ENCODE measurements at regions of chr6 and their contacts with region 1.

Region 1: DNA sequence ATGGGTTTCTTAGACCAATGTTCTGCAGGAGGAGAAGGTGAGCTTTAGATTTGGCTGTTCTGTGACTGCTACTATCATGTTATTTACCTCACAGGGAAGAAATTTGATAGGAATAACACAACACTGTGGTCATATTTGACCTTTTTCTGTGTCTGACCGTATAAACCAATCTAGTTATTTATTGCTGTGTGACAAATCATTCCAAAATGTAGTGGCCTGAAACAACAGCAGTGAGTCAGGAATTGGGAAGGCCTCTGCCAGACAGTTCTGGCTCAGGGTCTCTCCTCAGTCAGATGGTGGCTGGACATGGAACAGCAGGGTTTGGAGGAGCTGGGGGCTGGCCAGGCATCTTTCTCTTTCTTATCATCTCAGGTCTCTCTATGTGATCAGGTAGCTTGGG is 33.0 kb downstream of the RIPOR2 start:
- DNase-seq: no peak
- ATAC-seq: no peak
- H3K4me3 Mint-ChIP-seq: no peak overlapping the region
- H3K27ac Mint-ChIP-seq: peak overlapping the region; percentile 50
- H3K4me1 Mint-ChIP-seq: peaks cover 87% of the 10 kb centered on the region
- H3K27me3 Mint-ChIP-seq: no peaks in the 10 kb centered on the region

Region 2: GRCh38 chr6:24888715-24889370 is 13.9 kb before region 1 on chr6:
- CTCF ChIA-PET with region 1: interaction called, 19 read pairs
- POLR2A ChIA-PET with region 1: interaction called, 3 read pairs
- DNase-seq: no peak
- ATAC-seq: no peak
- H3K4me3 Mint-ChIP-seq: no peak overlapping the region
- H3K27ac Mint-ChIP-seq: peak overlapping the region; percentile 44
- H3K4me1 Mint-ChIP-seq: peaks cover 72% of the 10 kb centered on the region
- H3K27me3 Mint-ChIP-seq: no peaks in the 10 kb centered on the region

Region 3: DNA sequence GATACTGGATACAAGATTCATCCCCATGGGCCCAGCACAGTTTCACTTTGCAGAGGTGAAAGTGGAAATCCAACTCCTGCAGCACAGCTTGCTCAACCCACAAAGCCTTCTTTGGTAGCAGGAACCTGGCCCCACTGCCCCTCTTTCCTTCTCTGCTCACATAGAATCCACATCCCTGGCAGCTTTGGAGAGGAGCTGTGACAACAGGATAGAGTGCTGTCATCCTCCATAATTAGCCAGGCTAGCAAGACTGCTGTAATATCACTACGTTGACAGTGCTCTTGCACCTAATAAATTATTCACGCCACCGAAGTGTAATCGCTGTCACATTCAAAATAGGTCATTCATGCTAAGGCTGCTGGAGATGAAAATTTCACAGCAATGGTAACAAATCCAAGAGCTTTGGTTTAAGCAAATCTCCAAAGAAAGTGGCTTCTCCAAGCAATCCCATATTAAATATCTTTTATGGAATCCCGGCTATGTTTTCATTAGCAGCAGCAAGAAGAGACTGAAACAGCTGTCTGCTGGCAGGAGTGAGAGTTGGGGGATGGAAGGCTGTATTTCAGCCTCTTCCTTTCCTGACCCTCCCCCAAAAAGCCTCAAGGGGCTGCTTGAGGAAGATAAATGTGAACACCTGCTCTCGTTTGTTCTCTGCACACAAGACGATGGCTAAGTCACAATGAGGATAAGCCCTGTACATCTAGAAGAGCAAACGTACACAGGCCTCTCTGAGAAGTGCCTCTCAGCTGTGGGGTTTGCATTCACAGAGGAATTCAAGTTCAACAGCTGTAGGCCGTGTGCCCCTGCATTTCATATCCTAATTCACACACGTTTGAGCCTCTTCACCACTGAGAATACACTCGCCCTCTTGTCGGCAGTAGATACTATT is 16.5 kb after region 1 on chr6:
- CTCF ChIA-PET with region 1: interaction called, 74 read pairs
- POLR2A ChIA-PET with region 1: interaction called, 5 read pairs
- DNase-seq: peak; percentile 44
- ATAC-seq: peak; percentile 50
- H3K4me3 Mint-ChIP-seq: peak overlapping the region; percentile 53
- H3K27ac Mint-ChIP-seq: peak overlapping the region; percentile 62
- H3K4me1 Mint-ChIP-seq: peaks cover 86% of the 10 kb centered on the region
- H3K27me3 Mint-ChIP-seq: no peaks in the 10 kb centered on the region

Region 4: GRCh38 chr6:24974182-24975171 is 71.7 kb after region 1 on chr6:
- CTCF ChIA-PET with region 1: no interaction called
- POLR2A ChIA-PET with region 1: no interaction called
- DNase-seq: no peak
- ATAC-seq: peak; percentile 91
- H3K4me3 Mint-ChIP-seq: peak overlapping the region; percentile 24
- H3K27ac Mint-ChIP-seq: peak overlapping the region; percentile 73
- H3K4me1 Mint-ChIP-seq: peaks cover 20% of the 10 kb centered on the region
- H3K27me3 Mint-ChIP-seq: no peaks in the 10 kb centered on the region

Region 5: GRCh38 chr6:25312703-25313501 is 410.1 kb after region 1 on chr6:
- CTCF ChIA-PET with region 1: no interaction called
- POLR2A ChIA-PET with region 1: no interaction called
- DNase-seq: no peak
- ATAC-seq: no peak
- H3K4me3 Mint-ChIP-seq: no peak overlapping the region
- H3K27ac Mint-ChIP-seq: no peak overlapping the region
- H3K4me1 Mint-ChIP-seq: peaks cover 12% of the 10 kb centered on the region
- H3K27me3 Mint-ChIP-seq: no peaks in the 10 kb centered on the region

Region 6: DNA sequence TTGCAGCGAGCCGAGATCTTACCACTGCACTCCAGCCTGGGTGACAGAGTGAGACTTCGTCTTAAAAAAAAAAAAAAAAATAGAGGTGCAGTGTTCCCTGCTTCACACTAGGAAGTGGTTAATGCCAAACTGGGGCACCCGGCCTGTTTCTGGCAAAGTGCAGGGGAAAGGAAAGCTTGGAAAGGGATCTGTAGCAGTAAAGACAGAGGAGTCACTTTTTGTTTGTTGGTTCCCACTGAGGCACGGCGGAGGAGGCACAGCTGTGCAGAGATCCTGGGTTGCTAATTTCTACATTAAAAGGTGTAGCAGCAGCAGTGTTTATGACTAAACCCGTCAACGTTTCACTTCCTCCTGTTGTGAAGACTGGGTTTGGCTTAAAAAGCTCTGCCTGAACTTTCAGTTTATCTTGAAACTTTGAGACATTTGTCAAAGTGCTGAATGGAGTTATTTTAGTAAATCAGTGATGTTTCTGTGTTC is 501.9 kb after region 1 on chr6:
- CTCF ChIA-PET with region 1: no interaction called
- POLR2A ChIA-PET with region 1: no interaction called
- DNase-seq: peak; percentile 57
- ATAC-seq: peak; percentile 85
- H3K4me3 Mint-ChIP-seq: no peak overlapping the region
- H3K27ac Mint-ChIP-seq: no peak overlapping the region
- H3K4me1 Mint-ChIP-seq: peaks cover 17% of the 10 kb centered on the region
- H3K27me3 Mint-ChIP-seq: no peaks in the 10 kb centered on the region

Measured in activated CD8-positive, alpha-beta T cell treated with anti-CD3 and anti-CD28 coated beads, Interleukin-2, amount 10 ng/mL, durations not matched to agents 7 days and 5 days (primary cell).